ENCODE measurements at regions of chrX and their contacts with region 1.

Region 1: DNA sequence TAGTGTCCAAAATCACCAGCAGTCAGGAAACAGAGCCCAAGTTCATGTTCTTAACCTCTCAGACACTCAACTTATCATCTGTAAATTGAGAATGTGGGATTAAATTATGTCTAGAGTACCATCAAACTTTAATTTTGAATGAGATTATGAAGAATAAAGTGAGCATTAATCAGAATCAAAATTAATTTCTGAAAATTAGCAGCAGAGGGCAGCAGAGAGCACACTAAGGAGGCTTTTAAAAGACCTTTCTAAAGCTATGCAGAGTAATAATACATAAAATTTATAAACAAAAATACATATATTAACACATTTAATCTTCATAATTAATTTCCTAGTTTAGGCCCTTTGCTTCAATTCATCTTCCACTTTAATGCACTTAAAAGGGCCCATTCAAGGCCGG is 7.1 kb downstream of the TASL start:
- DNase-seq: no peak
- ATAC-seq: no peak

Region 2: DNA sequence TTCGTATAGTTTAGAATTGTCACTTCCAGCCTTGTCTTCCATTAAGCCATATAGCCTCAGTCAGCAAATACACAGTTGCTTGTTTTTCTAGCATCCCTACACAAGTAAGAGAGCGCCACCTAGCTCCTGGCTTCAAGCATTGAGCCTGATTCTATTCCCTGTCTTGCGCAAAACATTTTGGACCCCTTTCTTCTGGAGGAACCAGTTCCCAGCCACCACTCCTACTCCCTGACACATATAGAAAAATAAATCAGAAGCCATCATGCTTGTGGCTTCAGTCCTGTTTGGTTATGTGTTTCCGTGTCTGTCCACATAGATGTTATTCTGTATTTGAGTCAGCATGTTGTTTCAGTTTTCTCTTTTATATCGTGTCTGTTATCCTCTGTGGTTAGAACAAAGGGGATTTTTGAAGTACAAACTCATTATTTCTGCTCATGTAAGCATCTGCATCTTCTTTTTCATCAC is 142.6 kb after region 1 on chrX:
- intact Hi-C with region 1: loop called (anchors 10 kb)
- DNase-seq: peak; percentile 25
- ATAC-seq: no peak

Region 3: DNA sequence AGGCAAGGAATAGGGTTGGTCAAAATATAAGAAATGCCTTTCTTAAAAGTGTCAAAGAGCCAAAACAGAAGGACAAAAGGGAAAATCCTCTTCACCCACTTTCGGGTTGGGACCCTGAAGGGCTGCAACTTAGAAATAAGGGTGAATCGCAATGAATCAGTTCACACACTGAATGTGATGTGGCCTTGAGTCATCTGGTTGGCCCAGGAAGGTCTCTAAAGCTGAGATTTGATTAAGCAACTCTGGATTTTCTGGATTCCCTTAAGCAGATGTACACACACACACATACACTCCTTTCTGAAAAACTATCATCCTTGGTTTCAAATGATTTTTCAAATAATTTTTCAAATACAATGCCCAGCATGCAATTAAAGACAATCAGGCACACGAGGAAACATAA is 305.5 kb after region 1 on chrX:
- intact Hi-C with region 1: no loop called
- DNase-seq: no peak
- ATAC-seq: no peak

Region 4: GRCh38 chrX:30943984-30944780 is 373.7 kb after region 1 on chrX:
- intact Hi-C with region 1: no loop called
- DNase-seq: no peak
- ATAC-seq: no peak

Measured in left ventricle myocardium superior (tissue), 1 donor.